ENCODE measurements at regions of chr19 and their contacts with region 1.

Region 1: GRCh38 chr19:41263850-41264580 is at the start of gene HNRNPUL1:
- DNase-seq: peak; percentile 99
- ATAC-seq: peak; percentile 68
- H3K4me3 Mint-ChIP-seq: peak within 1 kb of the TSS; percentile 79
- H3K27ac Mint-ChIP-seq: peak within 1 kb of the TSS; percentile 99
- H3K4me1 Mint-ChIP-seq: peaks cover 36% of the 10 kb centered on the region
- H3K27me3 Mint-ChIP-seq: no peaks in the 10 kb centered on the region
- total RNA-seq, gene HNRNPUL1: 342 to 348 TPM

Region 2: DNA sequence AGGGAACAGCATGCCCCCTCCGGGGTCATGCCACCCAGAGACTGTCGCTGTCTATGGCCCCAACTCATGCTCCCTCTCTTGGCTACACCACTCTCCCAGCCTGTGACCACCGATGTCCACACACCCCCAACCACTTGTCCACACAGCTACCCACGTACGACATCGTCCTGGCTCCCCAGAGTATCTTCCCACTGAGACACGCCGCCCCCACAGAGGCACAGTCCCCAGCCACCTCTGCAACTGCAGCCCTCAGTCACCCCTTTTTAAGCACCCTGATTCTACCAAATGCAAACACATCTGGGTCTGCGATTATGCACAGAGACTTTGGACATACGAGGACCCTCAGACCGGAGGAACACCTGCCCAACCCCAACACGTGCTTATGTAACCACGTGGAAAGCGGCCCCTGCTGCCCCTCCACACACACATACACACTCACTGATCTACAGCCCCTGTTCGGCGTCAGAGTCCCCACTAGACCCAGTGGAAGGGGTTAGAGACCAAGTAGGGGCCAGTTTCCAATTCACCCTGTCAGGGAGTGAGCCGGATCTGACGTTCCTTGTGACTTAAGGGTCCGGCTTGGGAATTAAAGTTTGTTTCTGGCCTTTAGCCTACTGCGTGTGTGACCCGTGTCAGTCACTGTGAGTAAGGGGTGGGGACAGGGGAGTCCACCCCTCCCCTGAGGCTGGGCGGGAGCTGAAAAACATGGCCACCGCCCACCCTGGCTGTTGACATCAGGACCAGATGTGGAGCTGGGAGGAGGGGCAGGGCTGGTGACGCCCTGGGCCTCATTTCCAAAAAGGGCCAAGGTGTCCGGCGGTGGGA is 56.9 kb before region 1 on chr19:
- CTCF ChIA-PET with region 1: interaction called, 106 read pairs
- DNase-seq: no peak
- ATAC-seq: no peak
- H3K4me3 Mint-ChIP-seq: no peak overlapping the region
- H3K27ac Mint-ChIP-seq: no peak overlapping the region
- H3K4me1 Mint-ChIP-seq: peaks cover 11% of the 10 kb centered on the region
- H3K27me3 Mint-ChIP-seq: peaks cover 2% of the 10 kb centered on the region

Region 3: DNA sequence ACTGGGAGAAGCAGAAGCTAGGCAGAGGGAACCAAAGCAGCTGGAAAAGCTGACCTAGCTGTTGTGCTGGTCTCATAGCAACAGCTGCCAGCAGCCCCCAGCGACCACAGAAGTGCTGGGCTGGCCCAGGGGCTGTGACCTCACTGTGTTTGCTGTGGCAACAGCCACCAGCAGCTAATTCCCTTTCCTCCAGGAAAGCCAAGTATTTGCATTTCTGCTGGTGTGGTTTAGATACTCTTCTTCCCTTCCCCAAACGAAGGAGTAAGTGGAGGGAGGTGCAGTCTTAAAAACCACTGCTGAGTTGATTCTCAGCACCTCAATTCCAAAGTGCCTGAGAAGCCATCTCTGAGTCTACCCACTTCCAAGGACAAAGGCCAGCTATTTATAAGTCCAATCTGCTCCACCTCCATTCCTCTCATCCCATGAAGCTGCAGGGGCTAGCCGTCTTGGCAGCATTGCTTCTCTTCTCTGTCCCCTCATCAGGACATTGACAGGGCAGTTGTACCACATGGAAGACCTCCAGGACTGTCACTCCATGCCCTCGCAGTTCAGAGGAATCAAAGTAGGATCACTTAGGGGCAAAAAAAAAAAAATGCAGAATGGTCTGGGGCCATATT is 34.4 kb after region 1 on chr19:
- CTCF ChIA-PET with region 1: interaction called, 110 read pairs
- DNase-seq: peak; percentile 65
- ATAC-seq: peak; percentile 17
- H3K4me3 Mint-ChIP-seq: no peak overlapping the region
- H3K27ac Mint-ChIP-seq: peak overlapping the region; percentile 82
- H3K4me1 Mint-ChIP-seq: peaks cover 94% of the 10 kb centered on the region
- H3K27me3 Mint-ChIP-seq: no peaks in the 10 kb centered on the region

Region 4: DNA sequence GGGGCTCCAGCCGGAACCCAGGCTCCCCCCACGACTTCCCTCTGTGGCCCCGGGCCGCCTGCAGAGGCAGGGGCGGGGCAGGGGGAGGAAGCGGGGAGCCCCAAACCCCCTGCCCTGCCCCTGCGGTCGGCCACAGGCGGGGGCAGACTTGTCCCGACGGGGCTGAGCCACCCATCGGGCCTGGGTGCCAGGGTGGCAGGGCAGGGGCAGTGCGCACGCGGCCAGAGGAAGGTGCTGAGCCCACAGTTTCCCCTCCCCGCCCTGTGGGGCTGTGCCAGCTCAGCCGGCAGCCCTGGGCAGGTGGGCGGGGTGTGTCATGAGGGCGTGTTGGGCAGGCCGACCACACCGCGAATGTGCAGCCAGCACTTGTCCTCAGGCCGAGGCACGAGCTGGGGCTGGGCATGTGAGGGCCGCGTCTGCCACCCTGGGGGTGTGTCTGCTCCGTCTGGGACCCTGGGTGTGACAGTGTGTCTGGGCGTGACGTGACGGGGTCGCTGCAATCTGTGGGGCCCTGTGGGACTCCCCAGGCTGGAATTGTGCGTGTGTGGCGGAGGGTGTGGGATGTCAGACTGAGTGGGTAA is 63.7 kb after region 1 on chr19:
- CTCF ChIA-PET with region 1: interaction called, 10 read pairs
- DNase-seq: peak; percentile 90
- ATAC-seq: peak; percentile 73
- H3K4me3 Mint-ChIP-seq: peak overlapping the region; percentile 67
- H3K27ac Mint-ChIP-seq: peak overlapping the region; percentile 91
- H3K4me1 Mint-ChIP-seq: peaks cover 61% of the 10 kb centered on the region
- H3K27me3 Mint-ChIP-seq: no peaks in the 10 kb centered on the region

Region 5: GRCh38 chr19:41426952-41427646 is 163.1 kb after region 1 on chr19 and contains the start of gene B3GNT8:
- CTCF ChIA-PET with region 1: no interaction called
- DNase-seq: peak; percentile 72
- ATAC-seq: peak; percentile 73
- H3K4me3 Mint-ChIP-seq: peak within 1 kb of the TSS; percentile 85
- H3K27ac Mint-ChIP-seq: peak within 1 kb of the TSS; percentile 92
- H3K4me1 Mint-ChIP-seq: peaks cover 31% of the 10 kb centered on the region
- H3K27me3 Mint-ChIP-seq: no peaks in the 10 kb centered on the region
- total RNA-seq, gene B3GNT8: 3.2 TPM

Region 6: GRCh38 chr19:41439441-41440222 is 175.6 kb after region 1 on chr19 and contains the start of gene DMAC2:
- CTCF ChIA-PET with region 1: interaction called, 12 read pairs
- DNase-seq: peak; percentile 99
- ATAC-seq: peak; percentile 96
- H3K4me3 Mint-ChIP-seq: no peak within 1 kb of the TSS
- H3K27ac Mint-ChIP-seq: no peak within 1 kb of the TSS
- H3K4me1 Mint-ChIP-seq: peaks cover 19% of the 10 kb centered on the region
- H3K27me3 Mint-ChIP-seq: no peaks in the 10 kb centered on the region
- total RNA-seq, gene DMAC2: 43.2 to 56.5 TPM